PC-3 (cell line): ENCODE measurements at regions of chr3 and their contacts with region 1.

Region 1: GRCh38 chr3:183766745-183767606 is 58.4 kb downstream of the MAP6D1 start:
- DNase-seq: peak; percentile 86
- ATAC-seq: peak; percentile 93
- H3K4me3 ChIP-seq: no peak overlapping the region
- H3K27ac ChIP-seq: no peak overlapping the region
- H3K4me1 ChIP-seq: no peaks in the 10 kb centered on the region
- H3K27me3 ChIP-seq: no peaks in the 10 kb centered on the region
- CTCF ChIP-seq: peak; percentile 86

Region 2: GRCh38 chr3:183502237-183503181 is 264.5 kb before region 1 on chr3:
- CTCF ChIA-PET with region 1: interaction called, 15 read pairs
- POLR2A ChIA-PET with region 1: no interaction called
- intact Hi-C with region 1: loop called (anchors 1 kb)
- DNase-seq: peak; percentile 52
- ATAC-seq: peak; percentile 94
- H3K4me3 ChIP-seq: no peak overlapping the region
- H3K27ac ChIP-seq: no peak overlapping the region
- H3K4me1 ChIP-seq: no peaks in the 10 kb centered on the region
- H3K27me3 ChIP-seq: no peaks in the 10 kb centered on the region
- CTCF ChIP-seq: peak; percentile 60

Region 3: GRCh38 chr3:184040010-184040409 is 273.0 kb after region 1 on chr3:
- CTCF ChIA-PET with region 1: no interaction called
- POLR2A ChIA-PET with region 1: no interaction called
- intact Hi-C with region 1: no loop called
- DNase-seq: peak; percentile 67
- ATAC-seq: peak; percentile 99
- H3K4me3 ChIP-seq: no peak overlapping the region
- H3K27ac ChIP-seq: no peak overlapping the region
- H3K4me1 ChIP-seq: no peaks in the 10 kb centered on the region
- H3K27me3 ChIP-seq: no peaks in the 10 kb centered on the region; the same call in 1 of the 2 replicates
- CTCF ChIP-seq: peak; percentile 71